A673 (cell line): ENCODE measurements at regions of chr4 and their contacts with region 1.

Region 1: DNA sequence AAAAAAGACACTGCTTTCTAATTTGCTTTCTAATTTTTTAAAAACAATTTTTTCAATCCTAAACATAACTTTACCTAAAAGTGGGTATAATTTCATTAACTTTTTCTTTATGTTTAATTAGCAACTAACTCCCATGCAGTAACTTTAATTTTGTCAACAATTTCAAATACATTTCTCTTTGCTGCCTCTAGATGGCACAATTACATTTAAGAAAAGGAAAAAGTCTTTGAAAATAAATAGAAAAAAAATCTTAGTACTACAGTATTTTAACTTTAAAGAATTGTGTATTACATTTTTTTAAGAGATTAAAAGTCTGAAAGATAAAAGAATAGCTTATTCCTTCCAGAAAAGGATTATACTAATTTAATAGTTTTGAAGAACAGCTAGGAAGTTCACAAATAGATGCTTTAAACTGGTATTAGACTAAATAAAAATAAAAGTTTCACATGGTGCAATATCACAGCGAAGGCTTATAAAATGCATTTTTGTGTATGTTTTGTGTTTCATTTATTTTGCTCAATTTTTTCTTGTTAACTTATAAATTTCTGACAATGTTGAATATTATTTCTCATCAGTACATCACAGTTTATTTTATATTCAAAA is 105.1 kb downstream of the ADGRA3 start:
- DNase-seq: peak; percentile 45
- H3K4me3 ChIP-seq: no peak overlapping the region
- H3K27ac ChIP-seq: no peak overlapping the region
- H3K4me1 ChIP-seq: no peaks in the 10 kb centered on the region
- H3K27me3 ChIP-seq: no peaks in the 10 kb centered on the region
- CTCF ChIP-seq: peak; percentile 69

Region 2: GRCh38 chr4:22129454-22130029 is 281.2 kb before region 1 on chr4:
- CTCF ChIA-PET with region 1: no interaction called
- POLR2A ChIA-PET with region 1: no interaction called
- intact Hi-C with region 1: no loop called
- DNase-seq: peak; percentile 37
- H3K4me3 ChIP-seq: no peak overlapping the region
- H3K27ac ChIP-seq: no peak overlapping the region
- H3K4me1 ChIP-seq: no peaks in the 10 kb centered on the region
- H3K27me3 ChIP-seq: no peaks in the 10 kb centered on the region
- CTCF ChIP-seq: peak; percentile 56

Region 3: DNA sequence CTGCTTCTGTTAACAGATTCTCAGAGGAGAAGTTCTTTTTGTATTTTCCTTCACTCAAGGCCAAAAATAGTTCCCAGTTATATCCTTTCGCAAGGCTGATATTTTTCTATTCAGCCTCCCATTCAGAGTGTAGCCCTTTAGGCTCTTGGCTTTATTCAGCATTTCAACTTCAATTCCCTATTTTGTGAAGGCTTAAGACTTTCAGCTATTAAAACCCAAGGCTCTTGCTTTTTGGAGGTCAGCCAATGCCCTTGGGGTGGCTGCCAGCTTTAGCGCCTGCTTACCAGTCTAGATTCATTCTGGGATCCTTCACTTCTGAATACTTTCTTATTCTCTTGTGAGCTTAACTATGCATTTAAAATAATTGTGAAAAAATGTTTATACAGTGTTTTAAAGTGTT is 162.5 kb after region 1 on chr4:
- CTCF ChIA-PET with region 1: no interaction called
- POLR2A ChIA-PET with region 1: no interaction called
- intact Hi-C with region 1: no loop called
- DNase-seq: peak; percentile 40
- H3K4me3 ChIP-seq: no peak overlapping the region
- H3K27ac ChIP-seq: no peak overlapping the region
- H3K4me1 ChIP-seq: no peaks in the 10 kb centered on the region
- H3K27me3 ChIP-seq: no peaks in the 10 kb centered on the region
- CTCF ChIP-seq: no peak

Region 4: GRCh38 chr4:22607382-22607781 is 196.6 kb after region 1 on chr4:
- CTCF ChIA-PET with region 1: no interaction called
- POLR2A ChIA-PET with region 1: no interaction called
- intact Hi-C with region 1: loop called (anchors 1 kb)
- DNase-seq: peak; percentile 60
- H3K4me3 ChIP-seq: no peak overlapping the region
- H3K27ac ChIP-seq: no peak overlapping the region
- H3K4me1 ChIP-seq: no peaks in the 10 kb centered on the region
- H3K27me3 ChIP-seq: no peaks in the 10 kb centered on the region
- CTCF ChIP-seq: peak; percentile 60

Region 5: DNA sequence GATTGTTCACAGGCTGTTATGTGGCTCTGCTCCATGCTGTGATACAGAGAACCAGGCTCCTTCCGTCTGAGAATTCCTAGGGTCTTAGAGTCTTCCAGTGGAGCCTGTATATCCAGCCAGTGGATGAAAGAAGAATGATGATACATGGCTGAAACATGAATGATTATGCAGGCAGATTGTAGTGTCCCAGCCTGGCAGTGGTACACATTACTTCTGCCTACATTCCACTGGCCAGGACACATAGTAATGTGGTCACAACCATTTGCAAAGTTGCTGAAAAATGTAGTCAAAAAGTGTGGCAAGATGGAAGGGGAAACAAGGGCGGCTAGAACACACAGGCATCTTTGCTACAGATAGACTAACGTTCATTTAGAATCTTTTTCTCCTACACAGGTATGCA is 277.5 kb after region 1 on chr4:
- CTCF ChIA-PET with region 1: no interaction called
- POLR2A ChIA-PET with region 1: no interaction called
- intact Hi-C with region 1: loop called (anchors 1 kb)
- DNase-seq: no peak
- H3K4me3 ChIP-seq: no peak overlapping the region
- H3K27ac ChIP-seq: no peak overlapping the region
- H3K4me1 ChIP-seq: no peaks in the 10 kb centered on the region
- H3K27me3 ChIP-seq: peaks cover 37% of the 10 kb centered on the region
- CTCF ChIP-seq: no peak